Endothelial cell of umbilical vein (primary cell): ENCODE measurements at regions of chr13 and their contacts with region 1.

Region 1: DNA sequence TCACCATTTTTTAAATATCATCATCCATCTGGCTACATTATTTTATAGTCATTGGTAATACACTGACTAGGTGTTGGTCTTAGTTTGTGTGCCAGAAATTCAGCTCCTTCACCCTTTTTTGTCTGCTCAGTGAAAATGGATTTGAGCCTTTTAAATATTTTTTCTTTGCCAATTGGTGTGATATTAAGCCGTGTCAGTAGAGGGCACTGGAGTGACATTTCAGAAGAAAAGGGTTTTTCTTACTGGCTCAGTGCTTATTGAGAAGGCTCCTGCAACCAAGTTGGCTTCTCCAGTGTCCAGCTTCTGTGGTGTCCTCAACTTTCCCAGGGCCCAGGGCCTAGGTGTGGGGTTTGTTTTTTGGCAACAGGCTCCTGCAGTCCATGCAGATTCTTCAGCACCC is 546.6 kb downstream of the DACH1 start:
- DNase-seq: peak; percentile 31
- H3K4me3 ChIP-seq: no peak overlapping the region
- H3K27ac ChIP-seq: no peak overlapping the region
- H3K4me1 ChIP-seq: no peaks in the 10 kb centered on the region
- H3K27me3 ChIP-seq: no peaks in the 10 kb centered on the region
- CTCF ChIP-seq: peak; percentile 18 to 49
- POLR2A ChIP-seq: no peak

Region 2: GRCh38 chr13:70723732-70724131 is 596.7 kb before region 1 on chr13:
- CTCF ChIA-PET with region 1: no interaction called
- POLR2A ChIA-PET with region 1: no interaction called
- dilution Hi-C with region 1: no loop called
- intact Hi-C with region 1: loop called (anchors 10 kb)
- DNase-seq: peak; percentile 62
- H3K4me3 ChIP-seq: no peak overlapping the region
- H3K27ac ChIP-seq: no peak overlapping the region
- H3K4me1 ChIP-seq: no peaks in the 10 kb centered on the region
- H3K27me3 ChIP-seq: no peaks in the 10 kb centered on the region
- CTCF ChIP-seq: peak in 1 of 2 donors; percentile 28
- POLR2A ChIP-seq: no peak

Region 3: GRCh38 chr13:71030784-71031183 is 289.7 kb before region 1 on chr13:
- CTCF ChIA-PET with region 1: no interaction called
- POLR2A ChIA-PET with region 1: no interaction called
- dilution Hi-C with region 1: no loop called
- intact Hi-C with region 1: no loop called
- DNase-seq: no peak
- H3K4me3 ChIP-seq: no peak overlapping the region
- H3K27ac ChIP-seq: no peak overlapping the region
- H3K4me1 ChIP-seq: no peaks in the 10 kb centered on the region
- H3K27me3 ChIP-seq: no peaks in the 10 kb centered on the region
- CTCF ChIP-seq: no peak
- POLR2A ChIP-seq: no peak

Region 4: DNA sequence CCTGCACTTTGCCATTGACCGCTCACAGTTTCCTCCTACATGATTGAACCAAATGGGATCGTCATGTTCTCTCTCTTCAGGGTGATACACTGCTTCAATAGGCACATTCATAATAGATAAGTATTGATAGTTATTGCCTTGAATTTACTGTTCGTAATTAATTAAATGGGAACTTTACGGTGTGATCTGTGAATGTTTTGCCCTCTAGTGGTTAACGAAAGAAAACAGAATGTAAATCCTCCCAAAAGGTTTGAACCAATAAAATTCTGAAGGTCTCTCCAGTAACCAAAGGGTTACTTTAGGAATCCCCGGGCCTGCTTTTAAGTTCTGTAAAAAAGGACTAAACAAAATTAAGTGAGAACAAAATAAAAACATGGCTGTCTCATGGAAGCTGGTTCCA is 157.3 kb after region 1 on chr13:
- CTCF ChIA-PET with region 1: no interaction called
- POLR2A ChIA-PET with region 1: no interaction called
- dilution Hi-C with region 1: no loop called
- intact Hi-C with region 1: loop called (anchors 5 kb)
- DNase-seq: no peak
- H3K4me3 ChIP-seq: no peak overlapping the region
- H3K27ac ChIP-seq: no peak overlapping the region
- H3K4me1 ChIP-seq: no peaks in the 10 kb centered on the region
- H3K27me3 ChIP-seq: no peaks in the 10 kb centered on the region
- CTCF ChIP-seq: peak; percentile 13 to 23
- POLR2A ChIP-seq: no peak

Region 5: DNA sequence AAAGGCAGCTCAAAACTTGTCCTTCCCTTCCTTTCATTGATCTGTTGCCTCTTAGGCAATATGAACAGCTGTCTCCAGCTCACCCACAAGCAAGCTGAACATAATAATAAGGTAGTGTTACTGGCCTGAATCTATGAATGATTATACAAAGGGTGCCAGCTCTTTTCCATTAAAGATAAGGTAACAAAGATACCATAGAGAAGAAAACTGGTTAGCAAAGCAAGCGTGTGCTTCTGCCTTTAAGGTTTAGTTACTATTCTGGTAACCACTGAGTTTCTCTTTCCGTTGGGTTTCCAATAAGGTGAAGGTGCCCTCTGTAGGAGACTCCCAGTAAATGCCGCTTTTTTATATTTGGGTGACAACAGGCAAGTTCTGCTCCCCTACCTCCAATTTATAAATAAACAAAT is 558.7 kb after region 1 on chr13:
- CTCF ChIA-PET with region 1: interaction called, 76 read pairs
- POLR2A ChIA-PET with region 1: no interaction called
- dilution Hi-C with region 1: no loop called
- intact Hi-C with region 1: loop called (anchors 1 kb)
- DNase-seq: peak; percentile 75
- H3K4me3 ChIP-seq: no peak overlapping the region
- H3K27ac ChIP-seq: no peak overlapping the region
- H3K4me1 ChIP-seq: no peaks in the 10 kb centered on the region
- H3K27me3 ChIP-seq: no peaks in the 10 kb centered on the region
- CTCF ChIP-seq: peak; percentile 39 to 61
- POLR2A ChIP-seq: no peak

Region 6: DNA sequence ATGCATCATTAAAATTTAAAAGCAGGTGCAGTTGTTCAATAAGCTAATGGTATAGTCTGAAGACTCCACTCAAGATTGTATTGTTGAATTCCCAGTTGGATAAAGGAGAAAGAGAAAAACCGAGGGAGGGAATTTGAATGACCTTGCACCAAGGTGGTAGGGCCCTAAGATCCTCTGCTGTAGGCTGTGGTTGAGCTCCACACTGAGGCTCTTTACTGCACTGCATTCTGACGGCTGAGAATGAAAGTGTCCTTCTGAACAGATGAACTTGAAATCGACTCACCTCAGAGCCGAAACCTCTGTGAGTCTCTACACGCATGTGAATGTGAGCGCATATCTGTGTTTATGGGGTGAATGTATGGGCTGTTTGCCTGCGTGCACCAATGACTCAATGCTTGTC is 935.5 kb after region 1 on chr13:
- CTCF ChIA-PET with region 1: interaction called, 3 read pairs
- POLR2A ChIA-PET with region 1: no interaction called
- dilution Hi-C with region 1: no loop called
- intact Hi-C with region 1: loop called (anchors 1 kb)
- DNase-seq: peak; percentile 58
- H3K4me3 ChIP-seq: no peak overlapping the region
- H3K27ac ChIP-seq: no peak overlapping the region
- H3K4me1 ChIP-seq: no peaks in the 10 kb centered on the region
- H3K27me3 ChIP-seq: peaks cover 0 to 2% of the 10 kb centered on the region in 2 experiments
- CTCF ChIP-seq: peak; percentile 23 to 53
- POLR2A ChIP-seq: no peak